Sigmoid colon (tissue), 7 donors: ENCODE measurements at regions of chr2 and their contacts with region 1.

Region 1: GRCh38 chr2:151051574-151052220 is 210.0 kb downstream of the RBM43 start:
- DNase-seq: no peak
- H3K4me3 ChIP-seq: no peak overlapping the region
- H3K27ac ChIP-seq: no peak overlapping the region
- H3K4me1 ChIP-seq: peaks cover 0 to 19% (median 2%) of the 10 kb centered on the region in 4 donors
- H3K27me3 ChIP-seq: no peaks in the 10 kb centered on the region
- CTCF ChIP-seq: peak; percentile 35 to 73 (median 66)
- EP300 ChIP-seq: no peak
- POLR2A ChIP-seq: no peak

Region 2: DNA sequence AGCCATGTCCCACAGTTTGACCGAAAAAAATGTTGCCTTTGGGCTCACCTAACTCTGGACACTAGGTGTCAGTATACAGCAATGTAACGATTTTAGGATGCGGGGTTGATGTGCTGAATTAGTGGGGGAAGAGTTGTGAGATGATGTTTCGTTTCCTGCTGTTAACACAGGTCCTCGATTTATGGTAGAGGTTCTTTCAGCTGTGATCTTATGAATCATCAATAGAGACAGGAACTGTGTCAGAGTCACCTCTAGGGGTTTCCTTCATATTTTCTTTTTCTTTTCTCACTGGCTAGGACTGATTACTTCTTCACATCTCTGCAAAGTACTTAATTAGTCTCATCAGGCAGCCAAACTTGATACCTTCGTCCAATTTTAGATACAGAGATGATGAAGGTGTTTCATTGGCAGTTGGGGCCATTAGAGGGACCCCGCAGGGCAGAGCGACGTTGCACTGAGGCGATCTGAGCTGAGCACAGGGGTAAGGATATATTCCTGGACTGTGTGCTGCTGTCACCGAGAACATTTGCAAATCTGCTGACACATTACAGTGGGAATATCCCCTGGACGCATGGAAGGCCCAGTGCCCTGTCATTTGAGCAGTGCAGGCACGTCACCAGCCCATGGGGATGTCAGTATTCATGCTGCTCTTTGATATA is 1453.9 kb before region 1 on chr2:
- intact Hi-C with region 1: loop called (anchors 5 kb)
- DNase-seq: peak; percentile 62
- H3K4me3 ChIP-seq: peak overlapping the region in 2 of 4 donors; percentile 20 to 24
- H3K27ac ChIP-seq: no peak overlapping the region
- H3K4me1 ChIP-seq: peaks cover 0 to 4% (median 0%) of the 10 kb centered on the region in 4 donors
- H3K27me3 ChIP-seq: no peaks in the 10 kb centered on the region
- CTCF ChIP-seq: peak; percentile 69 to 78 (median 75)
- EP300 ChIP-seq: no peak
- POLR2A ChIP-seq: no peak

Region 3: DNA sequence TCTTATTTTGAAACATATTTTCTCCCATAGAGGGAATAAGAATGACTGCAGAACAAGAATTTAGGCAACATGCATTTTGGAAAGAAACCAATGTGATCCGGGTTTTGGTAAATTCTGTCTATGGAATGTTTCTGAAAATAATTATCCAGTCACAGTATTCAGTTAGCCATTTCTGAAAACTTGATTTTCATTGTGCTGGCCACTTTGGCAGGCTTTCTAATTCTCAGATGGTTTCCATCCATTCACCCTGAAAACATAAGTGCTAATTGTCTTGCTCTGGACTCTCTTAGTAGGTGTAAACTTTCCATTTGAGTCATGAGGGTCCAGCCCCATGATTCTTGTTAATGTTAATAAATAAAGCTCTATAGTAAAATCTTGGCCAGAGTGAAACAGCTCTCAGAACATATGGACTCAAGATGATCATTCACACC is 33.5 kb after region 1 on chr2:
- intact Hi-C with region 1: no loop called
- DNase-seq: no peak
- H3K4me3 ChIP-seq: no peak overlapping the region
- H3K27ac ChIP-seq: no peak overlapping the region
- H3K4me1 ChIP-seq: no peaks in the 10 kb centered on the region
- H3K27me3 ChIP-seq: no peaks in the 10 kb centered on the region
- CTCF ChIP-seq: no peak
- EP300 ChIP-seq: no peak
- POLR2A ChIP-seq: no peak

Region 4: DNA sequence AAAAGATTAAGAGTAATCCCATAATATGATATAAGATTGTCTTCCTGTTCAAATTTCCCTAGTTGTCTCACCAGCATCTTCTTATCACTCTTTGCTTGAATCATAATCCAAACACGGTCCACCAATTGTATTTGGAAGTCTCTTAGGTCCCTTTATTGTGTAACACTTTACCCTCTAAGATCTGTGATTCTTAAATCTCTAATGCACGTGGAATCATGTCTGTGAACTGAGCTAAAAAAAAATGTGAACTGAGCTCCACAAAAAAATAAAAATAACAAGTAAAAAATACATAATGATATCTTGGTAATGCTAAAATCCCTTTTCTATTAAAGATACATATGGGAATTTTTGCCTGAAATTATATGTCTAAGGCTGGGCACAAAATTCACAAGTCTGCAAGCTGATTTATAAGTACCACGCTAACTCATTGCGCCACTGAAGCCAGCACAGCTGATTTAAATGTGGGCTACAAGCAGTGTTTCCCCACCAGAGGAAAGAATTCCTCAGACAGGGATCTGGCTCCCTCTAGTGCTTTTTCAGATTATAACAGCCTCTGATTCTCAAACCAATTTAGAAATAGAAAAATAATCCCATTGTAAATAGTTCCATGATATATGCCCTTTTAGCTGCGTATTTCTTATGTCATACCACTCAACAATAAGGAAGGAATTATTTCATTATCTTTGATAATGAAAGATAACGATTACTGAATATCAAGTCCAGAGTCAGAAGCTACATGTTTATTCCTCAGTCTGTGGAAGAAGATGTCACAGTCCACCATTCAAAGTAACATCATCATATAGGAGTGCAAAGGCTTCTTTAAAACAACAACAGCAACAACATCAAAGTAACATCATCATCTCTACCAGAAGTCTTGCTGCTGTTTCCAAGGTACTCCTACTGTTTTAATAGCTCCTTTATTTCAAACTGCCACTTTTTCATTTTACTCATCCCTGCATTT is 187.1 kb after region 1 on chr2:
- intact Hi-C with region 1: loop called (anchors 10 kb)
- DNase-seq: peak; percentile 83
- H3K4me3 ChIP-seq: no peak overlapping the region
- H3K27ac ChIP-seq: no peak overlapping the region
- H3K4me1 ChIP-seq: peaks cover 0 to 7% (median 2%) of the 10 kb centered on the region in 4 donors
- H3K27me3 ChIP-seq: no peaks in the 10 kb centered on the region
- CTCF ChIP-seq: peak; percentile 74 to 85 (median 80)
- EP300 ChIP-seq: no peak
- POLR2A ChIP-seq: no peak